ENCODE measurements at regions of chr10 and their contacts with region 1.

Region 1: DNA sequence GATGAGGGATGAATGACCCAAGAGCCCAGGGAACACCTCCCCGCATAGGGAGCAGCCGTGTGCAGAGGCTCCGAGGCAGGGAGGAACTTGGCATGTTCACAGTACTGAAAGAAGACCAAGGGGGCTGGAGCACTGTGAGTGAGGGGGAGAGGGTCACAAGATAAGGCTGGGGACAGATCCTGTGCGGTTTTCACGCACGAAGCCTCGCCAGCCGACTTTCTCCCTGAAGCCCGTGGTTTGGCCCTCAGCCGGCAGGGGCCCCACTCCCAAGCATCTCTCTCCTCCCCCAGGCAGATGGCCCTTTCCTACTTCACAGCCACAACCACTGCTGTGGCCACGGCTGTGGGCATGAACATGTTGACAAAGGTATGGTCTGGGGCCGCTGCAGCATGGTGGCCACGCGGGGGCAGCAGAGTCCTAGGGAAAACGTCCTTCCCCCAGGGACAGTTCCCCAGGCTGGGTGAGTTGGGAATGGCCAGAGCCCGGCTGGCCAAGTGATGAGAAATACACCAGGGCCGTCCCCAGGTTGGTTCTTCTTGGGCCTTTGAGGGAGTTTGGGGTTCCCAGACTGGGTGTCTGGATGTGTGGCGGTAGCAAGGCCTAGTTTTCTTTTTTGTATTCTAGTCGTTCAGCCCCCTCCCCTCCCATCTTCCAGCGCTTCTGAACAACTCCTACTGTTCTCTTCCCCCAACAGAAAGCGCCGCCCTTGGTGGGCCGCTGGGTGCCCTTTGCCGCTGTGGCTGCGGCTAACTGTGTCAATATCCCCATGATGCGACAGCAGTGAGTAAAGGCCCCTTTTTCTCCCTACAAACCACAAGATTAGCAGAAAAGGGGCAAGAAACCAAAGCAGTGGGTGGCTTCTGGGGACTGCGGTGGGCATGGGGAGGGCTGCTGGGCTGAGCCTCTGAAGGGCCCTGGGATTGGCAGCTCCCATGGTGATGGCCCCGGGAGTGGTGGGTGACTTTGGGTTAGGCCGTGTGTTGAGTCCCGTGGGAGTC is 14.4 kb upstream of the WBP1L start:
- DNase-seq: peak; percentile 67 to 98 (median 91)

Region 2: GRCh38 chr10:102785621-102786217 is 56.4 kb after region 1 on chr10:
- intact Hi-C with region 1: no loop called
- DNase-seq: no peak

Region 3: GRCh38 chr10:103069453-103070331 is 340.4 kb after region 1 on chr10:
- intact Hi-C with region 1: loop called (anchors 10 kb)
- DNase-seq: peak in 7 of 10 donors; percentile 45 to 93 (median 66)

Measured in posterior cingulate gyrus (tissue), 11 donors.